ENCODE measurements at regions of chr19 and their contacts with region 1.

Region 1: DNA sequence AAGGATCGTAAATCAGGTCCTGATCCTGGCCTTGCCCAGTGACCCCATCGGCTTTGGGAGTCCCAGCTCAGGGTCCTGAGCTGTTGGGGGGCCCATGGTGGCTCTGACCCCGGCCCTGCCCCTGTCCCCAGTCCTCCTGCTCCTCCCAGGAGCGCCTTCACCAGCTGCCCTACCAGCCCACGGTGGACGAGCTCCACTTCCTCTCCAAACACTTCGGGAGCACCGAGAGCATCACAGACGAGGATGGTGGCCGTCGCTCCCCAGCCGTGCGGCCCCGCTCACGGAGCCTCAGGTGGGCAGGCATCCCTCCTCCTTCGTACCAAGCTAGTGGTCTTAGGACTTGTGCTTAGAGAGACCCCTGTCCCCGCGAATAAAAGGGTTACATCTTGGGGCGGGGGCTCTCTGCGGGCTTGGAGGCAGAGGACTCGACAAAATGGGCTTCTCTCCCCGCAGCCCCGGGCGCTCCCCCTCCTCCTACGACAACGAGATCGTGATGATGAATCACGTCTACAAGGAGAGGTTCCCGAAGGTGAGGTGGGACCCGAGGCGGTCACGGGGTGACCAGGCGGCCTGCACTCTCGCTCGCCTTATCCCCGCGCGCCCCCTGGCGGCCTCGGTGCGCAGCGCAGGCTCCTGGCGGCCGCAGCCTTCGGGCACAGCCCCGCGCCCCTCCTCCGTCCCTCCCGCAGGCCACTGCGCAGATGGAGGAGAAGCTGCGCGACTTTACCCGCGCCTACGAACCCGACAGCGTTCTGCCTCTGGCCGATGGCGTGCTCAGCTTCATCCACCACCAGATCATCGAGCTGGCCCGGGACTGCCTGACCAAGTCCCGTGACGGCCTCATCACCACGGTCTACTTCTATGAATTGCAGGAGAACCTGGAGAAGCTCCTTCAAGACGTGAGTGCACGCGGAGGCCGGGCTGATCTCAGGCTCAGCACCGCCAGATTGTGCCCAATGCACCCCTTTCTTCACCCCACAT is 9.1 kb downstream of the MAST1 start:
- DNase-seq: peak; percentile 68 to 89
- ATAC-seq: peak; percentile 95 to 98 (median 96)
- H3K4me3 ChIP-seq: peak overlapping the region in 8 of 10 donors; percentile 10 to 45 (median 26)
- H3K27ac ChIP-seq: no peak overlapping the region
- H3K4me1 ChIP-seq: peaks cover 0 to 10% (median 5%) of the 10 kb centered on the region in 9 donors
- H3K27me3 ChIP-seq: peaks cover 0 to 49% (median 34%) of the 10 kb centered on the region in 7 donors
- CTCF ChIP-seq: peak; percentile 98 to 100 (median 99)

Region 2: GRCh38 chr19:12564016-12564664 is 283.3 kb before region 1 on chr19:
- intact Hi-C with region 1: loop called in 2 of 10 experiments (anchors 5 kb)
- DNase-seq: peak; percentile 89 to 91
- ATAC-seq: peak; percentile 89 to 94 (median 92)
- H3K4me3 ChIP-seq: no peak overlapping the region
- H3K27ac ChIP-seq: no peak overlapping the region
- H3K4me1 ChIP-seq: peaks cover 0 to 8% (median 0%) of the 10 kb centered on the region in 9 donors
- H3K27me3 ChIP-seq: no peaks in the 10 kb centered on the region
- CTCF ChIP-seq: peak; percentile 89 to 98 (median 97)

Region 3: GRCh38 chr19:12681074-12681951 is 166.1 kb before region 1 on chr19 and contains the start of gene DHPS:
- intact Hi-C with region 1: loop called in 3 of 10 experiments (anchors 2 to 5 kb)
- DNase-seq: peak; percentile 85 to 97
- ATAC-seq: peak; percentile 89 to 96 (median 94)
- H3K4me3 ChIP-seq: peak within 1 kb of the TSS; percentile 71 to 100 (median 82)
- H3K27ac ChIP-seq: peak within 1 kb of the TSS; percentile 91 to 98 (median 94)
- H3K4me1 ChIP-seq: peaks cover 0 to 29% (median 13%) of the 10 kb centered on the region in 9 donors
- H3K27me3 ChIP-seq: no peaks in the 10 kb centered on the region
- CTCF ChIP-seq: no peak
- total RNA-seq, gene DHPS: 43.6 to 59.3 (median 49.7) TPM

Region 4: GRCh38 chr19:12757544-12758274 is 89.7 kb before region 1 on chr19:
- intact Hi-C with region 1: loop called in 5 of 10 experiments (anchors 2 to 5 kb)
- DNase-seq: peak; percentile 60 to 73
- ATAC-seq: peak; percentile 73 to 86 (median 76)
- H3K4me3 ChIP-seq: peak overlapping the region in 9 of 10 donors; percentile 21 to 50 (median 42)
- H3K27ac ChIP-seq: peak overlapping the region; percentile 28 to 64 (median 52)
- H3K4me1 ChIP-seq: peaks cover 0 to 31% (median 12%) of the 10 kb centered on the region in 9 donors
- H3K27me3 ChIP-seq: peaks cover 0 to 13% (median 4%) of the 10 kb centered on the region in 7 donors
- CTCF ChIP-seq: peak; percentile 77 to 97 (median 92)

Region 5: DNA sequence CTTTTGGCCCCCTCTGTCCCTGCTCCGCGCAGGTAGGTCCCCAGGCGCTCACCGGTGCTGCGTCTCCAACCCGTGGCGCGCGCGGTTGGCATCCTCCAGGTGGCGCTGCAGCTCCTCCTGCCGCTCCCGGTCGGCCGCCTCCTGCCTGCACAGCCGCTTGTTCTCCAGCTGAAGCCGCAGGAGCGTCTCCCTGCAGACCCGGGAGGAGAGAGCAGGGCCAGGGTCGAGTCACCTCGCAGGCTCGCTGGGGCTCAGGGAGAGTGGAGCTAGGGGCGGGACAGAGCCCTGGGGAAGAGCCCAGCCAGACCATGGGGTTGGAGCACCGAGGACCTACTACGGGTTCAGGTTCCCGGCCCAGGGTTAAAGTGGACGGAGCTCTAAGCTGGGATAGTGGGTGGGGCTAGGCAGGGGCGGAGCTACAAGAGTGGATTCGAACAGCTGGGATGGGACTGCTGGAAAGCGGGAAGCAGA is 81.4 kb before region 1 on chr19:
- intact Hi-C with region 1: loop called in 7 of 10 experiments (anchors 2 to 10 kb)
- DNase-seq: peak; percentile 85 to 91
- ATAC-seq: peak in 7 of 8 donors; percentile 67 to 90 (median 77)
- H3K4me3 ChIP-seq: peak overlapping the region in 7 of 10 donors; percentile 28 to 59 (median 44)
- H3K27ac ChIP-seq: peak overlapping the region in 9 of 10 donors; percentile 31 to 83 (median 53)
- H3K4me1 ChIP-seq: peaks cover 0 to 39% (median 4%) of the 10 kb centered on the region in 9 donors
- H3K27me3 ChIP-seq: no peaks in the 10 kb centered on the region
- CTCF ChIP-seq: peak in 7 of 9 donors; percentile 71 to 99 (median 88)

Region 6: GRCh38 chr19:12777217-12778016 is 70.0 kb before region 1 on chr19:
- intact Hi-C with region 1: loop called in 2 of 10 experiments (anchors 2 to 10 kb)
- DNase-seq: peak; percentile 80 to 87
- ATAC-seq: peak; percentile 39 to 69 (median 53)
- H3K4me3 ChIP-seq: peak overlapping the region; percentile 48 to 78 (median 70)
- H3K27ac ChIP-seq: peak overlapping the region; percentile 85 to 99 (median 97)
- H3K4me1 ChIP-seq: peaks cover 21 to 69% (median 49%) of the 10 kb centered on the region in 9 donors
- H3K27me3 ChIP-seq: no peaks in the 10 kb centered on the region
- CTCF ChIP-seq: peak; percentile 94 to 99 (median 98)

Region 7: GRCh38 chr19:12789904-12790619 is 57.4 kb before region 1 on chr19:
- intact Hi-C with region 1: no loop called
- DNase-seq: peak; percentile 97 to 98
- ATAC-seq: peak; percentile 41 to 65 (median 56)
- H3K4me3 ChIP-seq: peak overlapping the region; percentile 30 to 100 (median 85)
- H3K27ac ChIP-seq: peak overlapping the region; percentile 94 to 100 (median 99)
- H3K4me1 ChIP-seq: peaks cover 33 to 68% (median 57%) of the 10 kb centered on the region in 9 donors
- H3K27me3 ChIP-seq: no peaks in the 10 kb centered on the region
- CTCF ChIP-seq: no peak

Region 8: DNA sequence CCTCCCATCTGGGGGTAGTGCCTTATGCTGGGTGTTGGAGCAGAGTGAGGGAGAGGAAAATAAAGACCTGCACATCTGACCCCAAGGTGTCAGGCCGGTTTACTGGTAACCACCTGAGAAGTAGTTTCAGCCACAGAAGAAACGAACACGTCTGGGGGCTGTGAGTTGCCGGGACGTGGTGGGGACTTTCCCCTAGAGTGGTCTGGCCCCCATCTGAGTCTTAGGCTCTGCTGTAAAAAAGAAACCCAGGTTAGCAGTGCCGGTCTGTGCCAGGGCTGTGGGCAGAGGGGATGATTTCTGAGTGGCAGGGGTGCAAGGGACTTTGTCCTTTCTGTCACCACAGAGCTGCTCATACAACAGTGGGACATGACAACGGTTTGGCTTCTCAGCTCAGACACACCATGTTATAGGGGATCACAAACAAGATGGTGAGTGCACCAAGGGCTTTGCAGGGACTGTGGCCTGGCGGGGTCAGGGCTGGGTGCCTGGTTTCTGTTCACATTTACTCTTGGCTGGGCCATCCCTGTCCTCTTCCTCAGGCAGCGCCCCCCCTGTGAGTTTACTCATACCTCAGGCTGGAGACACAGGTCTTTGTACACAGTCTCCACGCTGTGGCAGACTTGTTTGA is 52.6 kb after region 1 on chr19:
- intact Hi-C with region 1: no loop called
- DNase-seq: no peak
- ATAC-seq: no peak
- H3K4me3 ChIP-seq: no peak overlapping the region
- H3K27ac ChIP-seq: no peak overlapping the region
- H3K4me1 ChIP-seq: no peaks in the 10 kb centered on the region
- H3K27me3 ChIP-seq: no peaks in the 10 kb centered on the region
- CTCF ChIP-seq: no peak

Region 9: DNA sequence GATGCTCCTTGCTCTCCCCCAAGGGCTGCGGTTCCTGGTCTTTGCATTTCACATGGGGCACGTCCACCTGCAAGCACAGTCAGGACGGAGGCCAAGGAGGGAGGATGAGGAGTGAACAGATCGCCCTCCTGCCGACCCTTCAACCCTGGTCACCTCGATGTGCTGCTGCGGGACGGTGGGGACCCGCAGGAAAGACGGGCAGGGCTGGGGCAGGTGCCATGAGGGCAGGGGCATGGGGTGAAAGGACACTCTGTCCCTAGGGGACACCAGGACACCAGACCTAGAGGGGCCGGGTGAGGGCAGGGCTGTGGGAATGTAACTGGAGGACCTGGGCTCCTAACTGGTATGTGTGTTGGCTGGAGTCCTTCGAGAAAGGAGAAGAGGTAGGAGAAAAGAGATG is 70.8 kb after region 1 on chr19:
- intact Hi-C with region 1: no loop called
- DNase-seq: no peak
- ATAC-seq: peak in 1 of 8 donors; percentile 22
- H3K4me3 ChIP-seq: no peak overlapping the region
- H3K27ac ChIP-seq: no peak overlapping the region
- H3K4me1 ChIP-seq: peaks cover 4 to 28% (median 14%) of the 10 kb centered on the region in 9 donors
- H3K27me3 ChIP-seq: no peaks in the 10 kb centered on the region
- CTCF ChIP-seq: no peak

Measured in heart right ventricle (tissue), 16 donors.